ENCODE measurements at regions of chr1 and their contacts with region 1.

Region 1: DNA sequence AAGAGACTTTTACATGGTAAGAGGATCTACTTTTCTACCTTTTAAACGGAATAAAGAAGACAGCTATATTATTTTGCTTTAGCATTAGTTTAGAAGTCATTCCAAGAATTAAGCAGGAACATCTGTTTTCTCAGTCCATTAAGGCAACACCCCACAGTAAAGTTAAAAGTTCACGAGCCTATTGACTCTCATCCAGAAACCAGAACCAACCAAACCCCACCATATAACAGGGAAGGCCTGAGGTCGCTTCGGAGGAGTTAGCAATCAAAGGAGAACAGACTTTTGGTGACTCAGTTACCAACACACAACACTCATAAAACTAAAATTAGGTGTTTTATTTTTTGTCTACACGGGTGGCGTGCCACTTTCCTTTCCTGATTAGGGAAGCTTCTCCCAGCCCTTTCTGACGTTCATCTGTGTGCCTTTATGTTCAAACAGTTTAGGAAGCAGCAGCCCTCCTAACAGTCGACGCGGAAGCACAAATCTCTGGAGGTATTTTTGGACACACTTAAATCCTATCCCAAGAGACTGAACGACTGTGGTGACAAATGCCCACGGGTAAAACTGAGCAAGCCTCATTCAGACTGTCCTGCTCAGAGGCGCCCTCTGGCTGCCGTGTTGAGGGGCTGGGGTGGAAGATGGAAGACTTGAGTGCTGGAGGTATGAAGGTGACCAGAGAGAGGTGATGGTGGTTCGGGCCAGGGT is 8.6 kb upstream of the PLA2G2C start:
- DNase-seq: peak; percentile 81
- H3K4me3 Mint-ChIP-seq: no peak overlapping the region
- H3K27ac Mint-ChIP-seq: no peak overlapping the region
- H3K4me1 Mint-ChIP-seq: no peaks in the 10 kb centered on the region
- H3K27me3 Mint-ChIP-seq: peaks cover 69% of the 10 kb centered on the region

Region 2: GRCh38 chr1:20151906-20152598 is 42.9 kb before region 1 on chr1:
- CTCF ChIA-PET with region 1: interaction called, 25 read pairs
- DNase-seq: peak; percentile 85
- H3K4me3 Mint-ChIP-seq: peak overlapping the region; percentile 69
- H3K27ac Mint-ChIP-seq: no peak overlapping the region
- H3K4me1 Mint-ChIP-seq: peaks cover 16% of the 10 kb centered on the region
- H3K27me3 Mint-ChIP-seq: peaks cover 27% of the 10 kb centered on the region

Region 3: GRCh38 chr1:20165522-20165951 is 29.4 kb before region 1 on chr1:
- CTCF ChIA-PET with region 1: interaction called, 146 read pairs
- DNase-seq: peak; percentile 50
- H3K4me3 Mint-ChIP-seq: no peak overlapping the region
- H3K27ac Mint-ChIP-seq: no peak overlapping the region
- H3K4me1 Mint-ChIP-seq: no peaks in the 10 kb centered on the region
- H3K27me3 Mint-ChIP-seq: peaks cover 57% of the 10 kb centered on the region

Region 4: DNA sequence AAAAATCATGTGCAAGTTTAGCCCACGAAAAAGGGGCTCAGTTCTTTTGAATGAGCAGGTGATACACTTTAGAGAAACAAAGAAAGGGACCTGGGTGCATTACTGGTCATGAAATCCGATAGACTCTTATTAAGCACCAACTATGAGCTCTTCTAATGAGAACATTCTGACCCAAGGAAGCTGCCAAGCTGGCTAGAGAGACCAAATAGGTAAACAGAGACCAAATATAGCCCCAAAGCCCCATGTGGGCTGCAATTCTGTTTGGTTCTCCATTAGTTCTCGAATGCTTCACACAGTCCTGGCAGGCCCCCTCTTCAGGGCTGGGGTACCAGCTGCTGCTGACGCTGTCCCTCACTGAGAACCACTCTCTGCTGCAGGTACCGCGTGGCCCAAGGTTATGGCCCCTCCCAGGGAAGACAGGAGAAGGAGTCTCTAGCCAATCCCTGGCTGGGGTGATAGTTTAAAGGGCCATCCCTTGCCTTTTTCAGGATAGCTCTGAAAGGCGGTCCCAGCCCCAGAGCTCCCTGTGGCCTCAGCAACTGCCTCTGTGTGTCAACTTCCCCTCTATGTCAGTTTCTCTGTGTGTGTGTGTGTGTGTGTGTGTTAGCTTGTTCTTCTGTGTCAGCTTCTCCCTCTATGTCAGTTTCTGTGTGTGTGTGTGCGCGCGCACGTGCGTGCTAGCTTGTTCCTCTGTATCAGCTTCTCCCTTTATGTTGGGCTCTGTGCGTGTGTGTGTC is 16.1 kb before region 1 on chr1:
- CTCF ChIA-PET with region 1: interaction called, 32 read pairs
- DNase-seq: no peak
- H3K4me3 Mint-ChIP-seq: no peak overlapping the region
- H3K27ac Mint-ChIP-seq: no peak overlapping the region
- H3K4me1 Mint-ChIP-seq: peaks cover 13% of the 10 kb centered on the region
- H3K27me3 Mint-ChIP-seq: peaks cover 37% of the 10 kb centered on the region

Region 5: DNA sequence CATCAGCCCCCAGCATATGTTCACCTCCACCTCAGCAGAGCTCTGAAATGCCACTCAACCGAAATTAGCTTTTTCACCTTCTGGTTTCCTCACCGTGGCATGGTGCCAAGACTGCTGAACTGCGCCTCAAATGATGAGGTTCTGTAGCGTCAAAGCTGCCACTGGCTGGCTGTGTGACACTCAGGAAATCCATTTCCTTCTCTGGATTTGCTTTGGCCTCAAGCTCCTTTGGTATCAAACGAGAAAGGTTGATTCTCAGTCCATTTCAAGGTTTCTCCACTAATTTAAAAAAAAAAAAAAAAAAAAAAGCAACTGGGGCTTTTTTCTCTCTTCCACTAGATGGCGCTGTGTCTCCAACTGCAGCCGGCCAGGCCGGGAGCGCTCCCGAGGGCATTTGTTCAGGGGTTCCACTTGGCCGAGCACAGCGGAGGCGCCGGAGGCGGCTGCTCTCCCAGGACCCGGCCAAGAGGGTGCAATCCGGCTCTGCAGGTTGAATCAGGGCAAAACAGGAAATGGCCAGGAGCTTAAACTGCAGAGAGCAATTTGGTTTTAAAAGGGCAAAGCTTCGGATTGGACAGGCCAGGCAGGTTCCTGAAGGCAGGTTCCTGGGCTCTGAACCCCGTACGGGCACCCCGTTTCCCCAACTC is 17.9 kb after region 1 on chr1:
- CTCF ChIA-PET with region 1: interaction called, 12 read pairs
- DNase-seq: peak; percentile 62
- H3K4me3 Mint-ChIP-seq: no peak overlapping the region
- H3K27ac Mint-ChIP-seq: no peak overlapping the region
- H3K4me1 Mint-ChIP-seq: peaks cover 2% of the 10 kb centered on the region
- H3K27me3 Mint-ChIP-seq: peaks cover 65% of the 10 kb centered on the region

Region 6: DNA sequence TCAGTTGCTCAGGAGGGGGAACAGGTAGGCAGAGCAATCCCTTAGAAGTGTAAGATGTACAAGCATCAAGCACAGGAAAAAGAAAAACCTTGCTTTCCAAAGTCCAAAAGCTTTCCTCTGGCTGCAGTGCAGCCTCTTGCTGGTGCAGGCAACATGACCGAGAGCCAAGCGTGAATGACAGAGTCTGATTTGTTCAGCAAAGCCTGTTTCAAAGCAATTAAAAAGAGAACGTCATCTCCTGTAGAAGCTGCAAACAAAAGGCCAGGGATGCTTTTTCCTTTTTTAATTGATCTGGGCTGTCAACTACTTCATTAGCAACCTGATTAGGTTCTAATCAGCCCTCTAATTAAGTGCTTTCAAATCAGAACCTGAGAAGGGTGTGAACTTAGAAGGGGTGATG is 29.6 kb after region 1 on chr1:
- CTCF ChIA-PET with region 1: no interaction called
- DNase-seq: no peak
- H3K4me3 Mint-ChIP-seq: no peak overlapping the region
- H3K27ac Mint-ChIP-seq: no peak overlapping the region
- H3K4me1 Mint-ChIP-seq: no peaks in the 10 kb centered on the region
- H3K27me3 Mint-ChIP-seq: peaks cover 64% of the 10 kb centered on the region

Region 7: DNA sequence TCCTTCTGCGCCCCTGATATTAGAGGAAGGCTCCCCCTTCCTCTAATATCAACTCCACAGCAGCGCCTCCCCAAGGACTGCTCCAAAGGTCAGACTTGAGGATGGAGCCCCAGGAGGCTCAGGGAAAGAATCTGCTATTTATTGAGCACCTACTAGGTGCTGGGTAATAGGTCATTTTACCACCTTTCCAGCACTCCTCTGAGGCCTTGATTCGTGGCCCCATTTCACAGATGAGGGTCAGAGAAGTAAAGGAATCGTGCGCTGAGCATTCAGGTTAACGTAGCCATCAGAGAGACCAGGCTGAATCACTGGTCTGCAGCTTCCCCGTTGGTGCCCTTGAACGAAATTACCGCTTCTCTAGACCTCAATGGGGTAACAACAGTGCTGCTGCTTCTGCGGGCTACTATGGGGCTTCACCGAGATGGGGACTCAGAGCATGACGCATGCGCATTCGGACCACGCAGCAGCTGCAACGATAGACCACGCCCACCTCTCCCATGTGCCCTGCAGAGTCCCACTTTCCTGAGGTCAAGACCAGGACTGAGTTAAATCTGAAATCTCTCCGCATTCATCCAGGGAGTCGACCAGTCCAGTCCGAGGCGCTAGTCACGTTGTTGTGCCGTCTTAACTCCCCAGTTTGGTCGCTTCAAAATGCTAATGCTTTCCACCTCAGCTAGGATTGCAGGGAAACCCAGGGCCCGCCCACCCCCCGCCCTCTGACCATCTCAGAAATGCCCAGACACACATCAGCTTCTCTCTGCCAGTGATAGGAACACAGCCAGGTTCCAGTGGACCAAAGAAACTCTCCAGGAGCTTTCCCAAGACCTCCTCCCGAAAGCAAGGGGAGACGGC is 278.2 kb after region 1 on chr1:
- CTCF ChIA-PET with region 1: no interaction called
- DNase-seq: no peak
- H3K4me3 Mint-ChIP-seq: no peak overlapping the region
- H3K27ac Mint-ChIP-seq: no peak overlapping the region
- H3K4me1 Mint-ChIP-seq: no peaks in the 10 kb centered on the region
- H3K27me3 Mint-ChIP-seq: peaks cover 65% of the 10 kb centered on the region

Measured in activated naive CD4-positive, alpha-beta T cell treated with anti-CD3 and anti-CD28 coated beads, Interleukin-2, amount 10 ng/mL, durations not matched to agents 7 days and 5 days (primary cell).